ENCODE measurements at regions of chr3 and their contacts with region 1.

Region 1: DNA sequence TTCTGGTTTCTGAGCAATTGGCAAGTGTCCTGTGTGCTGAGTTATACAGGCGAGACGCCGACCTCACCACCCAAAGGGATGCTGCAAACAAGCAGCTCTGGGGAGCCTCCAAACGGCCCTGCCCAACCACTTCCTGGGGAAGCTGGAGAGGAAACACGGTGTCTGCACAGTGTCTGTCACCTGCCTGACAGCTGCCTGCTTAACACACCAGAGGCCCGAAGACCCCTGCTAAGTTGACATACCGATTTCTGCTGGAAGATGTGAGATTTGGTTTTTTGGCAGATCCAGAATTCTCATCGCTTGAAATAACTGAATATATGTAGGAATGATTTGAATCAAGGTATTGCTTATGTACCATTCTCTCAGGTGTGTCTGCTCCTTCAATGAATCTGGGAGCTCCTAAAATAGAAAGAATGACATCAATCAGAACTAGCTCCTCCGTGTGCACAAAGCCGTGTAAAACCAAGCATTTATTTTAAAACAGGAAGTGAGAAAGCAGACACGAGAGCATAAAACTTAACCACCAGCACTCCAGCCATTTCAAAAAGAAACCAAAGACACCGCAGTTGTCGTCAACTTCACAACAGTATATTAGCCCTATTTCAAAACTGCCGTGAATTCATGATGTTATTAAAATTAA is 27.2 kb downstream of the LRRC2 start:
- DNase-seq: peak; percentile 93
- ATAC-seq: peak; percentile 97
- H3K4me3 Mint-ChIP-seq: peak overlapping the region; percentile 66
- H3K27ac Mint-ChIP-seq: peak overlapping the region; percentile 89
- H3K4me1 Mint-ChIP-seq: peaks cover 61% of the 10 kb centered on the region
- H3K27me3 Mint-ChIP-seq: peaks cover 11% of the 10 kb centered on the region

Region 2: DNA sequence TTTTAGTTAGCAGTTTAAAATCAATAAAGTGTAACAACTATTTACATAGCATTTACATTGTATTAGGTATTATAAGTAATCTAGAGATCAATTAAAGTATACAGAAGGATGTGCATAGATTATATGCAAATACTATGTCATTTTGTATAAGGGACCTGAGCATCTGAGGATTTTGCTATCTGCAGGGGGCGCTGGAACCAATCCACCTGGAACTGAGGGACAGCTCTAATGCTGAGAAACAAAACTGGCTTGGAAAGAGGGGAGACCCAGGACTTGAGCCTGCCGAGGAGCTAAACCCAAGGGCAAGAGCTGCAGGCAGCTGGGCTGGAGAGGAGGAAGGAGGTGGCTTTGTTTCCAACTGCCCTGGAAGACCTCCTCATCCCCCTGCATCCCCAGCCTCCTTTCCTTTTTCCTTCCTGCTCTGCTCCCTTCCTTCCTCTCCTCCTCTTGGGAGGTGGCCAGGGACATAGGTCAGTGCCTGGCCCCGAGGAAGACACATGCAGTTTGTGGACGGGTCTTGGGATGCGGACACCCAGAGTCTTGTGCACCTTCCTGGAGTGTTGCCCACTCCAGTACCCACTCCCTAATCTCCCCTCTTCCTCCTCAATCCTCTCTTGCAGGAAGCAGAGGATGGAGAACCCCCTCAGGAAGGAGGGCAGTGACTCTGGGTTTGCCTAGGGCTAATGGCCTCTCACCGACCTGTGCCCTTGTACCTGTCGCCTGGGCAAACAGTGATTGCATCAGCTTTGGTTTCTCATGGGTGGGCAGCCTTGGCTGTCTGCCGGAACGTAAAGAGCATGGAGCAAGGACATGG is 42.0 kb before region 1 on chr3:
- CTCF ChIA-PET with region 1: interaction called, 17 read pairs
- POLR2A ChIA-PET with region 1: interaction called, 3 read pairs
- DNase-seq: peak; percentile 64
- ATAC-seq: no peak
- H3K4me3 Mint-ChIP-seq: no peak overlapping the region
- H3K27ac Mint-ChIP-seq: no peak overlapping the region
- H3K4me1 Mint-ChIP-seq: peaks cover 2% of the 10 kb centered on the region
- H3K27me3 Mint-ChIP-seq: no peaks in the 10 kb centered on the region

Region 3: DNA sequence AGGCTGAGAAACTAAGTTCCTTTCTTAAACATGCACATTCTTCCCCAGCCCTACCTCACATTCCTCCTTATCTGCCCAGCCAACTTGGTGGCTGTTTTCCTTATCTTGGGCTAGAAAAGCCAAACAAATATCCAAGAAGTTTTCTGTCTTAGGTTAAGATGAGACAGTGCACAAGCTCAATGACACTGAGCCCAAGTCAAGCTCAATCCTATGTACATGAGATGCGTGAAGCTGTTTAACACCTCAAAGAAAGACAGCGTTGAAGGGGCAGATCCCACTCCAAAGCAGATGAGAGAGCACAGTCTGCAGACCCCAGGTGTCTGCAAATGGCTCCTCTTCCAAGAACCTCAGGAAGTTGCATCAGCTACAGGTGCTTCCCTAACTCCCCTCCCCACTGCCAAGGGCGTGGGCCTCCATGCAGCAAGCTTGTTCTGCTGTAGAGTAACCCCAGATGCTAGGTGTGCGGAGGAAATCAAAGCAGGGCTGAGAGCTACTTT is 10.5 kb after region 1 on chr3:
- CTCF ChIA-PET with region 1: interaction called, 20 read pairs
- POLR2A ChIA-PET with region 1: interaction called, 12 read pairs
- DNase-seq: no peak
- ATAC-seq: peak; percentile 33
- H3K4me3 Mint-ChIP-seq: no peak overlapping the region
- H3K27ac Mint-ChIP-seq: no peak overlapping the region
- H3K4me1 Mint-ChIP-seq: peaks cover 26% of the 10 kb centered on the region
- H3K27me3 Mint-ChIP-seq: peaks cover 15% of the 10 kb centered on the region